Esophagus muscularis mucosa (tissue), 4 donors: ENCODE measurements at regions of chr1 and their contacts with region 1.

Region 1: GRCh38 chr1:40404670-40405462 is 31.3 kb downstream of the SMAP2 start:
- DNase-seq: no peak
- H3K4me3 ChIP-seq: peak overlapping the region in 1 of 4 donors; percentile 7
- H3K27ac ChIP-seq: no peak overlapping the region
- H3K4me1 ChIP-seq: peaks cover 0 to 13% (median 7%) of the 10 kb centered on the region in 4 donors
- H3K27me3 ChIP-seq: no peaks in the 10 kb centered on the region
- CTCF ChIP-seq: peak; percentile 83 to 89 (median 87)
- EP300 ChIP-seq: no peak
- POLR2A ChIP-seq: no peak

Region 2: GRCh38 chr1:40143891-40144575 is 260.8 kb before region 1 on chr1:
- intact Hi-C with region 1: loop called (anchors 2 kb)
- DNase-seq: no peak
- H3K4me3 ChIP-seq: no peak overlapping the region
- H3K27ac ChIP-seq: no peak overlapping the region
- H3K4me1 ChIP-seq: peaks cover 0 to 3% (median 0%) of the 10 kb centered on the region in 4 donors
- H3K27me3 ChIP-seq: peaks cover 0 to 21% (median 0%) of the 10 kb centered on the region in 4 donors
- CTCF ChIP-seq: peak; percentile 71 to 82 (median 71)
- EP300 ChIP-seq: no peak
- POLR2A ChIP-seq: no peak

Region 3: GRCh38 chr1:40344597-40344996 is 60.3 kb before region 1 on chr1:
- intact Hi-C with region 1: loop called (anchors 5 kb)
- DNase-seq: no peak
- H3K4me3 ChIP-seq: no peak overlapping the region
- H3K27ac ChIP-seq: no peak overlapping the region
- H3K4me1 ChIP-seq: no peaks in the 10 kb centered on the region
- H3K27me3 ChIP-seq: no peaks in the 10 kb centered on the region
- CTCF ChIP-seq: no peak
- EP300 ChIP-seq: no peak
- POLR2A ChIP-seq: no peak

Region 4: GRCh38 chr1:40575336-40575735 is 170.5 kb after region 1 on chr1:
- intact Hi-C with region 1: no loop called
- DNase-seq: no peak
- H3K4me3 ChIP-seq: no peak overlapping the region
- H3K27ac ChIP-seq: no peak overlapping the region
- H3K4me1 ChIP-seq: no peaks in the 10 kb centered on the region
- H3K27me3 ChIP-seq: no peaks in the 10 kb centered on the region
- CTCF ChIP-seq: no peak
- EP300 ChIP-seq: no peak
- POLR2A ChIP-seq: no peak